ENCODE measurements at regions of chrX and their contacts with region 1.

Region 1: DNA sequence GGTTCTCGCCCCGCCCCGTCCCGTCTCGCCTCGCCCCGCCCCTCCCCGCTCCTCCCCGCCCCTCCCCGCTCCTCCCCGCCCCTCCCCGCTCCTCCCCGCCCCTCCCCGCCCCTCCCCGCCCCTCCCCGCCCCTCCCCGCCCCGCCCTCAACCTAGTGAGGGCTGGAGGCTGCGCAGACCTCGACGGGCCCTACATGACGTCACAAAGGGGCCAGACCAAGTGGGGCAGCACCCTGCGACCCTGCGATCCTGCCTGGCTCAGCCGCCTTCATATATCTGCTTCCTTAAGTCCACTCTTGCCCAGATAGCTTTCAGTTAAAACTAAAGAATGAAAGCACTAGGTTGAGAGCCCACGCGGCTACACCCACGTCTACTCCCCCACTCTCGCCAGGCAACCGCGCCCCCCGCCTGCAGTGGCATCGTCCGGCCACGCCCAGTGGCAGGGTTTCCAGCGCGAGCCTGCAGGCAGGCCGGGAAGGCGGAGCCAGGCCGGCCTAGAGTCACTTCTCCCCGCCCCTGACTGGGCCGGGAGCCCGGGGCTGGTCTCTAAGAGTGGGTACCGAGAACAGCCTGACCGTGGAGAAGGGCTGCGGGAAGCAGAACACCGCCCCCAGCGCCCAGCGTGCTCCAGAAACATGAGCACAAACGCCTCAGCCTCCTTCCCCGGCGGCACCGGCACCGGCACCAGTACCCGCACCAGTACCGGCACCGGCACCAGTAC is 1.5 kb upstream of the MAOA start:
- DNase-seq: peak; percentile 96

Region 2: DNA sequence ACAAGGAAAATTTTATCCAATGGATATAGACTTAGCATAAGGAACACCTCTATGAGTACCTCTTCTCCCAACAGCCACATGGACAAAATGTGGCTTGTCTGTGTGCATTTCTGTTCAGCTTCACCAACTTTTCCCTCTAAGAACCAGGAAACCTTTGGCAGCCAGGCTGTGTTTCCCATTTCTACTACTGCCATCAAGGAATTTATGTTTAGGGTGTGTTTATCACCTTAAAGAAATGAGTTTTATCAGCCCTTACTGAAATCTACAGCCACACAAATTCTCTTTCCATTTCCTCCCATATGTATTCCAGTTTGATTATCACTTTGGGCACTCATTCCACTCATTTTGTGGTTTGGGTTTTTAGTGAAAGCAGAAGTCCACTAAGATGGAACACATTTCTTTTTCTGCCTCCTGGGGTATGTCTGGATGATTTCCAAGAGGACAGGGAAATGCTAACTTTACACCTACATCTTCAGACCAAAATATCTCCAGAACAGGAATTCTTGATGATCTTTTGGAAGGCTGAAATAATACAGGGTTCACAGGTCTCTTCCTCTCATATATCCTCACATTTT is 81.1 kb before region 1 on chrX:
- intact Hi-C with region 1: loop called (anchors 10 kb)
- DNase-seq: no peak

Region 3: DNA sequence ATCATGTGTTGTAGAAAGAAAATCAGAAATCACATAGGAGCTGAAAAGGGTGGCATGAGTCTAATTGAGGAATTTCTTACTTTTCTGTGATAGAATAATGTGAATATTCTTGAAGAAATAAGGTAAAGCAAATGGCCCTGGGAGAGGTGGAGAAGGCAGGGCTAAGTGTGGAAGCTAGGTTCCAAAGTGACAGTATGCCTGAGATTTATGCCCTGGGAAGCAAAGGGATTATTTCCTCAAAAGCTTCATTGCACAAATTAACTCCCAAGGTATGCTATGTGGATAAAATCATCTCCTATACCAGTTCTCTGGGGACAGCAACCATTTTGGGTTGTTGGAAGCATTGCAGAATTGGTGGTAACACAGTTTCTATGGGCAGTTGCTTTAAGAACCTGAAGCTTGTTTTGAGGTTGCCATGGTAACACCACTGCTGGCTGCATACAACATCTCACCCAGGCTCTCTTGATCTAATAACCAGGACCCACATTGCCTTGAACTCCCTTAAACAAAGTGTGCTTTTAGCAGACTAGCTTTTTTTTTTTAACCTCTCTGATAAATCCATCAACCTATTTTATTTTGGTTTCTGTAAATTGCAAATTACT is 22.5 kb after region 1 on chrX:
- intact Hi-C with region 1: no loop called
- DNase-seq: no peak

Region 4: DNA sequence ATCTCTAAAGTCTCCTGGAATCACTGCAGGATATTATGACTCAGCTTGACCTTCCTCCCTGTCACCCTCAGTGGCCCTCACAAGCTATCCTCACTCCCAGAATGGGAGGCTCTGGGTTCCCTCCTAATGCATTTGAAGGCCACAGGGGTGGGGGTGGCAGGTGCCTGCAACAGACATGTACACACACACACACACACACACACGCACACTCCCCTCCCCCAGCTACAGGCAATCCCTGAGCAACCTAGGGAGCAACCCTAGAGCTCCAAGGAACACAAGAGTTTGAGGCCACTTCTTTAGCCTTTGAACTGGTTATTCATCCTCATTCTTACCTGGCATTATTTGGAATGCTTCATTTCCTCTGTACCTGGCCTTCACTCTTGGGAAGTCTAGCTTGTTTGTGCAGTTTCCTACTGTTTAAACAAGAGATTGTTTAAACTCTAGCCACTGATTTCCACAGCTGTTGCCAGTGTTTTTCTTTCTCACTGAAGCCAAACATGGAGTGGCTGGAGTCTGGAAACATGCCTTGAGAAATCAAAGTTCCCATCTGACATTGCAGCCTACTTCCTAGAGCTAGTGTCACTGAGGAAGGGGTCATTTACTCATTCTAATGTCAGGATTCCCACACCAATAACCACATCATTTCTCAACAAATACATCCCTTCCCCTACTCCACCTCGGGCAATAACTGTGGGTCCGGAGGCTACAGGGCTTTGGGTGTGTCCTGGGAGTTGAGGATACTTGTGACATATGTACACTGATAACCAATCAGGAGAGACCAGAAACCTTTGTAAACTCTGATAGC is 39.2 kb after region 1 on chrX:
- intact Hi-C with region 1: loop called (anchors 1 kb)
- DNase-seq: no peak

Region 5: GRCh38 chrX:43707812-43708548 is 53.4 kb after region 1 on chrX:
- intact Hi-C with region 1: loop called (anchors 5 kb)
- DNase-seq: no peak

Region 6: DNA sequence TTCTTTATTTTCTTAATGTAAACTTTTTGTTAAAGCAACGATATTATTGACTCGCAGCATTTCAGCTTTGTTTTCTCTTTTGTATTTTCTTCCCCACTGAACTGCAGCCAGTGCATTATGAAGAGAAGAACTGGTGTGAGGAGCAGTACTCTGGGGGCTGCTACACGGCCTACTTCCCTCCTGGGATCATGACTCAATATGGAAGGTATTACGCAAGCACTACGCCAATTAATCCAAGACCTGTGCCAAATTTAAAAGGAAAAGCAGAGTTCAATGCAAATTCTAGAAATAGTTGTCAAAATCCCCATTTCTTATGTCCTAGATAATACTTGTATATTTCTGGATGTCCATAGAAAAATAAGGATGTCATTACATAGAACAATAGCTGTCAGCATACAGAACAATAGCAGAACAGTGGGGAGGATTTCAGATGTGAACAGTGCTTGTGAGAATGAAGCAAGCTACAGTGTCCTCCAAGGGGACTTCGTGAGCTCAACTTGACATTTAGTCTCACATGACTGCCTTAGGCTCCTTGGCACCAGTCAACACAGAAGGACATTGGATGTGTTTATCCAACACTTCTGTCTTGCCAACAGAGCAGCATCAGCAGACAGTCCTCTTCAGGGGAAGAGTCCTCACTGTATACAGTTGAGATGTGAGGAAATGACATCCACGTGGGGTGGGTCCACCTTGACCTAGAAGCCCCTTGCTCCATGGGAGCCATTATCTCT is 87.4 kb after region 1 on chrX:
- intact Hi-C with region 1: loop called (anchors 5 kb)
- DNase-seq: no peak